Astrocyte of the cerebellum (primary cell): ENCODE measurements at regions of chr1 and their contacts with region 1.

Region 1: GRCh38 chr1:245926888-245927287 is 580.2 kb downstream of the SMYD3 start:
- DNase-seq: no peak
- H3K4me3 ChIP-seq: no peak overlapping the region
- CTCF ChIP-seq: no peak

Region 2: DNA sequence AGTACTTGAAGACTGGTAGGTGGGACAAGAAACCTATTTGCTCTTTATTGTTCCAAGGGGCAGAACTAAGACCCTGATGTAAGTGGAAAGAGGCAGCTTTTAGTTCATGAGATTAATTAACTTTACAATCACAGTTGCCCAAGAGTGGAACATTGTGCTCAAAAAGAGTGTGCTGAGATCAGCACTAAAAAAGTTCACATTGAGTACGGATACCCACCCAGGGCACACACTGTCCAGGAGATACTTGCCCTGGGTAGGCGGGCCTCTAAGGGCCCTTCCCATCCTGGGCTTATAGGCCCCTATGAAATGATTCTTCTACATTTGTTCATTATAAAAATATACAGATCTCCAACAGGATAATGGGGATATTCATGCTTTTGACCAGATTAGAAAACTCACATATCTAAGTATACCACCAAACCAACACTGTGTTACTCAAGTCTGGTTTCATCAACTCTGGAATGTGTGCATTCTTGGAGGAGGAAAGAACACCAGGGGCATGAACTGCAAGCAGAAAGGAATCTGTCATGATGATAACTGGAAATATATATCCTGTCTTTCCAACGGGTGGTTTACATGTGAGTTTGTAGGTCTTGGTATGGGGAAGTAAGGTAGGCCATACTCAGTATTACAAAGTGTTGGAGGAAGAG is 46.0 kb before region 1 on chr1:
- in situ Hi-C with region 1: loop called (anchors 5 kb)
- DNase-seq: peak; percentile 73
- H3K4me3 ChIP-seq: no peak overlapping the region
- CTCF ChIP-seq: no peak